Heart right ventricle (tissue), 16 donors: ENCODE measurements at regions of chr7 and their contacts with region 1.

Region 1: DNA sequence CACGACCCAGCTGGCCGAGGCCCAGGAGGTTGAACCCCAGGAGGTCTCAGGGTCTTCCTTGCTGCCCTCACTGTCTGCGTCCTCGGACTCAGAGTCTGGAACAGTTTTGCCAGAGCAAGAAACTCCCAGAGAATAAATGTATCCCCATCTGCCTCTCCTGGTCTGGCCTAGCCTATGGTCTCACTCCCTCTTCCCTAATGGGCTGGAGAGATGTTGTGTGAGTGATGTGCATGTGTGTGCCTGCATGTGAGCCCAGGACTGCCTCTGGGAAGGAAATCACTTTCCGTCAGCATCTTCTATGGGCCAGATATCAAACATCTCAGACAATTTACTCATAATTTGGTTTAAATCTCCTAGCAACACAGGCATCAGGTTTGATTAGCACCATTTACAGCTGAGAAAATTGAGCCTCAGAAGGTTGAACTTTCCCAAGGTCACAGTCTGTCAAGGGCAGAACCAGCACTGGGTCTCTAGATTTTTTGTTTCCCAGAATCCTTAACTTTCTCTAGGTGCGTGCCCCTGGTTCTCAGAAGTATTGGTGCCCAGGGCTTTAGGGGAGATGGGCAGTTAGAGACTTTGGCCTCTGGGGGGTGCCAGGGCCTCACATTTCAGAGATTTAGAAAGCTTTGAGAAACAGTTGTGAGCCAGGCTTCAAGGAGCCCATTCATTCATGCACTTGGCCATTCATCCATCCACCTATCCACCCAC is 4.9 kb downstream of the TMEM270 start:
- DNase-seq: no peak
- ATAC-seq: peak in 7 of 8 donors; percentile 47 to 84 (median 62)
- H3K4me3 ChIP-seq: no peak overlapping the region
- H3K27ac ChIP-seq: no peak overlapping the region
- H3K4me1 ChIP-seq: peaks cover 0 to 23% (median 9%) of the 10 kb centered on the region in 9 donors
- H3K27me3 ChIP-seq: peaks cover 0 to 4% (median 0%) of the 10 kb centered on the region in 7 donors
- CTCF ChIP-seq: peak; percentile 55 to 79 (median 71)

Region 2: GRCh38 chr7:73822319-73823076 is 43.4 kb before region 1 on chr7:
- intact Hi-C with region 1: no loop called
- DNase-seq: no peak
- ATAC-seq: peak in 1 of 8 donors; percentile 48
- H3K4me3 ChIP-seq: no peak overlapping the region
- H3K27ac ChIP-seq: no peak overlapping the region
- H3K4me1 ChIP-seq: peaks cover 0 to 17% (median 0%) of the 10 kb centered on the region in 9 donors
- H3K27me3 ChIP-seq: peaks cover 0 to 5% (median 0%) of the 10 kb centered on the region in 7 donors
- CTCF ChIP-seq: no peak

Region 3: DNA sequence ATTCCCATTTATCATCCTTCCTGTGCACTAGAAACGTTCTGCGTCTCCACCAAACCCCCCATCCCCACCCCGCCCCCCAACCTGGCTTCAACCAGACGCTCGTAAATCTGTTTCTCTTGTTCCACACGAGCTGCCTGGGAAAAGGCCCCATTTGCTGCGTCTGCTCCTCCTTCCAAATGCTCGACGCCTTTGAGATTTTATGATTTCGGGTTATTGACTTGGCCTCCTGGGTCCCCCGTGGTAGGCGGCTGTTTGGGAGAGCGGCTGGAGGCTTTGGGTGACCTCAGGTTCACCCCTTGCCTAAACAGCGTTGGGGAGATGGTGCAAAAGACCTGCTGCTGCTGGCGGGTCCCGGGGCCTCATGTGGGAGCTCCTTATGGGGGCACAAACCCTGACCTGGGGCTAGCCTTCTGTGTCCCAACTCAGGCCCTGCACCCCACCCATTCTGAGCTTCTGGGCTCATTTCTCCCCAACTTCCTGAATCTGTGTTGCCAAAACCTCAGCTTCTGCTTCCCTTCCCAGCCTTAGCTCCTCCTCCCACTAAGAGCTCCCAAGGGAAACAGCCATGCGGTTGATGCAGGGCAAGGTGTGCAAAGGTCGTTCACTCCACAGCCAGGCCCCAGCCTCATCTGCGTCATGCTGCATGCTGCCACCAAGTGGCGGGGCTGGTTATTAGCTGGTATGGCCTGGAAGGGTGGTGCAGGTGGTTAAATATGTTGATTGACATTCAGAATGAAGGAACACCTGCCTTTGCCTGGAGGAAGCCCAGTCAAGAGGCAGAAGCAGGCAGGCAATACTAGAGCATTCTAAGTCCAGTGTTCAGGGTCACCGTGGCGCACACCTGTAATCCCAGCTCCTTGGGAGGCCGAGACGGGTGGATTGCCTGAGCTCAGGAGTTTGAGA is 113.0 kb after region 1 on chr7:
- intact Hi-C with region 1: loop called in 2 of 10 experiments (anchors 5 to 10 kb)
- DNase-seq: peak; percentile 41 to 46
- ATAC-seq: peak in 7 of 8 donors; percentile 42 to 73 (median 61)
- H3K4me3 ChIP-seq: no peak overlapping the region
- H3K27ac ChIP-seq: no peak overlapping the region
- H3K4me1 ChIP-seq: peaks cover 0 to 17% (median 11%) of the 10 kb centered on the region in 9 donors
- H3K27me3 ChIP-seq: no peaks in the 10 kb centered on the region
- CTCF ChIP-seq: peak; percentile 10 to 52 (median 41)

Region 4: GRCh38 chr7:74183613-74184450 is 317.9 kb after region 1 on chr7:
- intact Hi-C with region 1: loop called in 2 of 10 experiments (anchors 10 kb)
- DNase-seq: no peak
- ATAC-seq: peak in 2 of 8 donors; percentile 14 to 41
- H3K4me3 ChIP-seq: no peak overlapping the region
- H3K27ac ChIP-seq: peak overlapping the region in 2 of 10 donors; percentile 30 to 54
- H3K4me1 ChIP-seq: peaks cover 19 to 100% (median 95%) of the 10 kb centered on the region in 9 donors
- H3K27me3 ChIP-seq: no peaks in the 10 kb centered on the region
- CTCF ChIP-seq: peak in 5 of 9 donors; percentile 13 to 23 (median 20)

Region 5: GRCh38 chr7:74206589-74207120 is 340.8 kb after region 1 on chr7:
- intact Hi-C with region 1: loop called in 4 of 10 experiments (anchors 10 kb)
- DNase-seq: peak; percentile 87 to 91
- ATAC-seq: peak; percentile 80 to 89 (median 85)
- H3K4me3 ChIP-seq: peak overlapping the region in 6 of 10 donors; percentile 22 to 43 (median 30)
- H3K27ac ChIP-seq: no peak overlapping the region
- H3K4me1 ChIP-seq: peaks cover 0 to 33% (median 0%) of the 10 kb centered on the region in 9 donors
- H3K27me3 ChIP-seq: no peaks in the 10 kb centered on the region
- CTCF ChIP-seq: peak; percentile 87 to 99 (median 98)